HCT116 (cell line): ENCODE measurements at regions of chr7 and their contacts with region 1.

Region 1: DNA sequence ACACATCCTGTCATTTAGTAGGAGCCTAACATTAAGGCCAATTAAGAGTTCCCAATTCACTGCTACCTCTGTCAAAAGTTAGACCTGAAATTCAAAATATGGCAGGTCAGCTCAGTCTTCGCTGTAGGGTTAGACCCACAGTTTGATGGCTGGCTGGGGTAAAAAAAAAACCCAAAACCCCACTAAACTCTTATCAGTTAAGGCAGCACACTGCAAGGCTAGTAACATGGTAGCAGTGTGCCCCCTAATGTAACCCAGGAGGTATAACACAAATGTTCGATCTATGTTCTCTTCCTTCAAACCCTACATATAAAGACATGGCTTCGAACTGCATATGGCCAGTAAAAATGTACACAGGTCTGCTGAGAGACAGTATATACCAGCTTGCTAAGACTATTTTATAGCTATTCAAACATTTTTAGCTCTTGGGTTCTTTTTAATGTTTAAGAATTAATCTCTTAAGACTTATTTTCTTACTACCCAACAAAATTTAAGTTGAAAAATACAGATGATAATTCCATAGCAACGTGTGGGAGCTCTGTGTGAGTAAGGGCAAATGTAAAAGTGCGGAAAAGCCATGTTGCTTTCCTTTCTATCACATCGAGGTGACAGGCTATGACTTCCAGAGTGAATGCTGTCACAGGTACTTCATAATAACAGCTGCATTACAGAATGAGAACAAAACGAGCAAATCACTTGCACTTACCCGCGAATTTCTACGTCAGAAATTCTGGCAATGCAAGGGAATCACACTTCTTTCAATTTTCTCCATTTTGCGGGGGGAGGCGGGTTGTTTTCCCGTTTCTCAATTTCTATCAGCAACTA is 168.4 kb upstream of the IMMP2L start:
- DNase-seq: peak; percentile 39
- ATAC-seq: peak; percentile 92
- H3K4me3 ChIP-seq: no peak overlapping the region
- H3K27ac ChIP-seq: no peak overlapping the region
- H3K4me1 ChIP-seq: no peaks in the 10 kb centered on the region
- H3K27me3 ChIP-seq: no peaks in the 10 kb centered on the region
- CTCF ChIP-seq: peak; percentile 62 to 77 (median 69)
- POLR2A ChIP-seq: no peak
- RAD21 ChIP-seq: peak; percentile 88

Region 2: DNA sequence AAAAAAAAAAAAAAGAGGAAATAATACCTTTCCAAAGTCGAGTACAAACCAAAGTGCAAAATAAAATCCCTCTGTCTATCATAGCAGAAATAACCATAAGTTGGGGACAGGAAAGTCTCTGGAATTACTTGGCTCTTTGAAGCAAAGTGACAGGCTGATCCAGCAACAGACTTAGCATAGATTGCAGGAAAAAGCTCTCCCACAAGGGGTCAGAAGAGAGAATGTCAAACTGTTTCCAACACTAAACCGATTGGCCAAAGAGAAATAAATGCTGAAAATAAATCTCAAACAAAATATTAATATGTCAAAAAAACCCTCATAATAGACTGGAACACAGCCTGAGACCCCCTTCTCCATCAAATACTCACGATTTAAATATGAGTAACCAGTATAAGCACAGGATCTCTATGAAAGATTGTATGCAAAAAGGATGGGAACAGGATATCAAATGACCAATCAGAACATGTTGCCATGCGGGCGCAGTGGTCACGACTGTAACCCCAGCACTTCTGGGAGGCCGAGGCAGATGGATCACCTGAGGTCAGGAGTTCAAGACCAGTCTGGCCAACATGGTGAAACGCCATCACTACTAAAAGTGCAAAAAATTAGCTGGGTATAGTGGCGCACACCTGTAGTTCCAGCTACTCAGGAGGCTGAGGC is 1640.4 kb before region 1 on chr7:
- CTCF ChIA-PET with region 1: no interaction called
- POLR2A ChIA-PET with region 1: no interaction called
- RAD21 ChIA-PET with region 1: no interaction called
- intact Hi-C with region 1: loop called (anchors 5 kb)
- DNase-seq: peak; percentile 38
- ATAC-seq: peak; percentile 81
- H3K4me3 ChIP-seq: no peak overlapping the region
- H3K27ac ChIP-seq: no peak overlapping the region
- H3K4me1 ChIP-seq: no peaks in the 10 kb centered on the region
- H3K27me3 ChIP-seq: no peaks in the 10 kb centered on the region
- CTCF ChIP-seq: peak; percentile 41 to 70 (median 65); a peak in 5 of 6 replicates
- POLR2A ChIP-seq: no peak
- RAD21 ChIP-seq: peak; percentile 61

Region 3: DNA sequence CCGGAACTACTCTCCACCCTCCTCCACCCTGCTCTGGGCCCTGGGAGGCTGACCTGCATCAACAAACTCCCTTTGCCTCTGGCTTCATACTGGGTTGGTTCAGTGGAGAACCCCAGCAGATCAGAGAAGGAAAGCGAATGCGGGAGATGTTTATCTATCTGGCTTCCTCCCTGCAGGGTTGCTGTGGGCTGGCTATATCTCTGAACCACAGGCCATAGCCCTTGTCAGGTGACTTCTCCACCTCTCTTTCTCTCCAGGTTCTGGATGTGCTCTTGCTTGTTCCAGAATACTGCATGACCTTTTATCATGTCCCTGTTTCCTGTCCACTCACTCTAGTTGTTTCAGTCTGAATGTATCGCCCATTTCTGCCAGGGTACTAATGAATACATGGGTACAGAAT is 667.8 kb after region 1 on chr7:
- CTCF ChIA-PET with region 1: no interaction called
- POLR2A ChIA-PET with region 1: no interaction called
- RAD21 ChIA-PET with region 1: no interaction called
- intact Hi-C with region 1: no loop called
- DNase-seq: no peak
- ATAC-seq: no peak
- H3K4me3 ChIP-seq: no peak overlapping the region
- H3K27ac ChIP-seq: no peak overlapping the region
- H3K4me1 ChIP-seq: no peaks in the 10 kb centered on the region
- H3K27me3 ChIP-seq: peaks cover 5% of the 10 kb centered on the region
- CTCF ChIP-seq: no peak
- POLR2A ChIP-seq: no peak
- RAD21 ChIP-seq: no peak